RWPE1 (cell line): ENCODE measurements at regions of chr4 and their contacts with region 1.

Region 1: DNA sequence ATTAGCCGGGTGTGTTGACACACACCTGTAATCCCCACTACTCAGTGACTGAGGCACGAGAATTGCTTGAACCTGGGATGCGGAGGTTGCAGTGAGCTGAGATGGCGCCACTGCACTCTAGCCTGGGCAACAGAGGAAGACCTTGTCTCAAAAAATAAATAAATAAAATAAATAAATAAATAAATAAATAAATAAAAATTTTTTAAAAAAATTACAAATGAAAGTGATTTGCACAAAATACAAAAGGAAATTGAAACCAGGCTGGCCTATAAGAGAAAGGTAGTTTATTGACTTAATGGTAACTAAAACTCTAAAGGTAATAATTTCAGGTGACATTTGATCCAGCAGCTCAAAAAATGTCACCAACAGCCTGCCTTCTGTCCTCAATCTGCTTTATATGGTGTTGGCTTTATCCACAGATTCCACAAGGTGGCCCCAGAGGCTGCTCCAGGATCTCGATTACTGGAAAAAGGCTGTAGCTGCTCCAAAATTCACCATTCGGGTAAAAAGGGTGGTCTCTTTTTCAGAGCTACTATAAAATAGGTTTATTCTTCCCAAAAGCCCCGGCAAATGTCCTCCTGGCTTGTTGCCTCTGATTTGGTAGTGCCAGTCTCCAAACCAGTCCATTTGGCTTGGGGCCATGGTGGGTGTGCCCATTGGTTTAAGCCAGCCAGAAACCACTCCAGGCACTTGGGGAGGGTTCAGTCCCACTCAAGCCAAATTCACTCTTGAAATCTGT is 61.4 kb upstream of the TRIM2 start:
- DNase-seq: peak; percentile 75
- H3K27ac ChIP-seq: peak overlapping the region; percentile 77
- CTCF ChIP-seq: peak; percentile 85

Region 2: DNA sequence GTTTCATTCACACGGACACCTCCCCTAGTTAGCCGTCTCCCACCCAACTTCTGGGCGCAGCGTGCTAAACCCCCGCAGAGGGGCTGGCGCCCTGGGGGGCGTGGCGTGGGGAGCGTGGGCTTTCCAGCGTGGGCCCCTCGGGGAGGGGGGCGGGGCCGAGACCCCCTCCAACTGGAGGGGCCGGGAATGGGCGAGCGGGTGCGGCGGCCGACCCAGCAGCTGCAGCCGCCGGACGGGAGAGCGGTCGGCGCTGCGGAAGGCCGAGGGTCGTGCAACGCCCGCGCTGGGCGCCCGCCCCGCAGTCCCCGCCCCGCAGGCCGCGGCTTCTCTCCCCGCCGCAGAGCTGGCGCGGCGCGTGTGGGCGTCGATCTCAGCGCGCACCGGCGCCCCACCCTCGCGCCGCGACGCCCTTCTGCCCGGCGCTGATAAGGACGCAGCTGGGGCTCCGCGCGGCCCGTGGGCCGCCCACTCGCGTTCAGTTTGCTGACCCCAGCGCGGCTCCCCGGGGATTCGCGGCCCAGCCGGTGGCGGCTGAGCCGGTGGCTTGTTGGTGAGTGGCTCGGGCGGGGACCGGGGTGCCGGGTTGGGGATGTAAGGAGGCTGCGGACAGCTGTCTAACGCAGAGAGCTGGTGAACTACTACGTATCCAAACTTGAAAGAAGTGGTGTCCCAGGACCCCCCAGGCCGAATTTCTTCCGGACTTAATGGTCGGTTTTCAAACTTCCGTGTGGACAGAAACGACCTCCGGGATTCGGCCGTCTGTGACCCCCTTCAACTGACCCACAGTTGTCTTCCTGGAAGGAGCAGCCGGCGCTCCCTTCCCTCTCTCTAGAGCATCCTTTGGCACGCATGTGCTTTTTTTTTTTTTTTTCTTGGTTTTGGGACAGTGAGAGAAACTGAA is 205.3 kb before region 1 on chr4:
- CTCF ChIA-PET with region 1: no interaction called
- POLR2A ChIA-PET with region 1: no interaction called
- DNase-seq: peak; percentile 36
- H3K27ac ChIP-seq: no peak overlapping the region
- CTCF ChIP-seq: no peak

Region 3: DNA sequence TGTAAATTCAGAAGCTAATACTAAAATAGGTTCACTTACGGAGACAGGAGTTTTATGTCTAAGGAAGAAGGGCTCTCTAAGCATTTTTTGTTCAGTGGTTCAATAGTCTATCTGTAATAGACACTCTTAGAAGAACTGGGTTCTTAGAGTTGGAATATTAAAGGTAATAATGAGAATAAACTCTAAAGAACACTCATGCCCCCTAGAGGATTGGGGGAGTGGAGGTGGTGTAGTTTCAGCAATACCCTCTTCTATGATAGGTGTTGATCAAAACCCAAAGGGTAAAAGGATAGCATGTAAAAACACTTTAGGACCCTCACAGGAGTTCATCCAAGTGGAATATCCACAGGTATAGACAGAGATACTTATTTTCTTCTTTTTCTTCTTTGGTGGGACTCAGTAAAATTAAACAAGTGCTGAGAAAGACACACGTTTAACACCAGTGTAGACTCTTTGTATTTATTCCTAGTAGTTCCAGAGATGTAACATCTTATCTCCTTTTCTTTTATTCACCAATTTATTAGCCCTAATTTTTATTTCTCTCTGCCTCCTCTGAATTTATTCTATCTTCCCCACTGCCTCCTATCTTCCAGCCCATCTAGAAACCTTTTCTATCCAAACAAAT is 175.9 kb after region 1 on chr4:
- CTCF ChIA-PET with region 1: interaction called, 23 read pairs
- POLR2A ChIA-PET with region 1: no interaction called
- DNase-seq: peak; percentile 71
- H3K27ac ChIP-seq: no peak overlapping the region
- CTCF ChIP-seq: peak; percentile 81